HCT116 (cell line): ENCODE measurements at regions of chr18 and their contacts with region 1.

Region 1: DNA sequence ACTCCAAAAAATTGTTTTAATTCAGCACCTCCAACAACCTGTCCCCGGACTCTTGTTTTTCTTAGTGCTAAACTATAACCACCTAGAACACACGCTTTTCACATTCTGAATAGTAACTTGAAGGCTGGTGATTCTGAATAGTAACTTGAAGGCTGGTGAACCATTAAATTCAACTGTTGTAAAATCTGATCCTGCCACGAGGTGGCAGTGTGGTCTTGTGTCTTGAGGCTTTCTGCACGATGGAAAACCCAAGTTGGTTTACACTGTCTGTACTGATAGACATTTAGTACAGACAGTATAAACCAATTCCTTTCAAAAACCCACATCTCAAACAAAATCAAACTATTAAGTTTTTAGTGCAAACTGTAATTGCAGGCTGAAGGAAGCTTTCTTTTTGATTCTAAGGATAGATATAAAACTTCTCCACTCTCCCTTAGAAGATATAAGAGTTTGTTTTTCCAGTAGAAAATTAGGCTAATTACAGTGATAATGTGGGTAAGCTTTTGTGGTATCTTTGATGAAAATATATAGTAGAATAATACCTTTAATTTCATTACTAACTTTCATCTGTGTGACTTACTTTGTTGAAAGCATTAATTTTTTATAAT is 57.6 kb downstream of the VAPA start:
- DNase-seq: peak; percentile 60
- ATAC-seq: peak; percentile 83
- H3K4me3 ChIP-seq: no peak overlapping the region
- H3K27ac ChIP-seq: no peak overlapping the region
- H3K4me1 ChIP-seq: no peaks in the 10 kb centered on the region
- H3K27me3 ChIP-seq: no peaks in the 10 kb centered on the region
- CTCF ChIP-seq: peak; percentile 48 to 86 (median 58); a peak in 4 of 6 replicates
- POLR2A ChIP-seq: no peak
- RAD21 ChIP-seq: peak; percentile 91

Region 2: DNA sequence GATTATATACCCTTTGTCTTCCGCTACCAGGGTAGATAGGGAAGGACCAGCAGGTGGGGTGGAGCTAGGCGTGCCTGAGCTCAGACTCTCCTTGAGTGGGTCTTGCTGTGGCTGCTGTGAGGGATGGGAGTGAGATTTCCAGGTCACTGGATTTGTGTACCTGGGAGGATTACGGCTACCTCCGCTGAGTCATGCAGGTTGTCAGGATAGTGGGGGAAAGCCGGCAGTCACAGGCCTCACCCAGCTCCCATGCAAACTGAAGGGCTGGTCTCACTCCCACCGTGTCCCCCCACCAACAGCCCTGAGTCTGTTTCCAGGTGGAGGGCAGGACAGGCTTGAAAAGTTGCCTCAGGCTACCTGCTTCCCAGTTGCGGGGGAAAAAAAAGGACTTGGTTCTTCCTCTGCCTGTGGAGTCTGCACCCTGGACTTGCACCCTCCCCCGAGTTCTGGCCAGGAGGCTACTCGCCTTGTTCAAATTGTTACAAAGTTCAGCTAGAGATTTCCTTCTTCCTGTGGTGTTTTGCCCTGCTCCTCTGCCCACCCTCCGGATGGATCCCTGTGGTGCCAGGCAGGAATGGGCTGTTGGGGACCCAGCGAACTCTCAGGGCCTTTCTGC is 210.7 kb after region 1 on chr18:
- CTCF ChIA-PET with region 1: no interaction called
- POLR2A ChIA-PET with region 1: no interaction called
- RAD21 ChIA-PET with region 1: no interaction called
- intact Hi-C with region 1: no loop called
- DNase-seq: no peak
- ATAC-seq: no peak
- H3K4me3 ChIP-seq: no peak overlapping the region
- H3K27ac ChIP-seq: no peak overlapping the region
- H3K4me1 ChIP-seq: no peaks in the 10 kb centered on the region; a peak in 1 of 4 replicates
- H3K27me3 ChIP-seq: 0 out of 2 replicates have a peak, but pooled peaks cover 4% of the 10 kb centered on the region
- CTCF ChIP-seq: no peak
- POLR2A ChIP-seq: no peak
- RAD21 ChIP-seq: no peak

Region 3: DNA sequence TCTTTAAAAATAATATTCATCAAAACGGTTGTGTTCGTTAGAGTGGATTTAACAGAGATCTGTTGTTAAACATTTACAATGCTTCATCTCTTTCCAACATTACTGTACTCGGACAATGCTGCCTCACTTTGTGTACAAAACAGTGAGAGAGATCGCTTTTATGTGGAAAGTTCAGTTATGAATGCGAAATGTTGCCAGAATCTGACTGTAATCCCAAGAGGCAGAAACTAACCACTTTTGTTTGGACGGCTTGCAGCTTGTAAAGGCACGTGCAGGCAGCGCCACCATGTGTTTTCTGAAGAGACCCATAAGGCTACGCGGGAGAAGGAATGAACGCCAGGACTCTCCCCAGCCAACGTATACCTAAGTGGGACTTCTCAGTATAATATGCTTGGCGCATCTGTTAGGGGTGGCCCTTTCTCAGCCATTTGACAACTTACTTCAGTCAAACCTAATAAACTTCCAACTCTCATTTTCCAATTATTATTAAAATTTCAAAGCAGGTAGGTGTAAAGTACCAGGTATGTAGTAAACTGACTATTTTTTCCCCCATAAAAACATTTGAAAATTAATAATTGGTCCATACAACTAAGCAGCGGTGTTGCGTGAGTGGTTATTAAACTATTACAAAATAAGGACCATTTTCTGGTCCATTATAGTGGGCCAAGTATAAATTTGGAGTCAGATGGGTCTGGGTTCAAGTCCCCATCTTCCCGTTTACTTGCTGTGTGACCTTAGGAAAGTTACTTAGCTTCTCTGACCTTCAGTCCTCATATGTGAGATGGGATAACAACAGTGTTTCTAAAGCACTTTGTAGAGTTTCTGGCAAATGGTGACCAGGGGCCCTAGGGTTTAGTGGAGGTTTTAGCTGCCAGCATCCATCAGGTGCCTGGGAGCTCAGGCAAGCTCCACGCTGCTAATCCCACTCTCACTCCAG is 548.9 kb after region 1 on chr18:
- CTCF ChIA-PET with region 1: interaction called, 24 read pairs
- POLR2A ChIA-PET with region 1: interaction called, 4 read pairs
- RAD21 ChIA-PET with region 1: no interaction called
- intact Hi-C with region 1: loop called (anchors 1 kb)
- DNase-seq: peak; percentile 73
- ATAC-seq: peak; percentile 98
- H3K4me3 ChIP-seq: no peak overlapping the region
- H3K27ac ChIP-seq: no peak overlapping the region
- H3K4me1 ChIP-seq: peaks cover under 1 to 5% of the 10 kb centered on the region in 2 experiments; a peak in 3 of 4 replicates
- H3K27me3 ChIP-seq: peaks cover 27% of the 10 kb centered on the region; the same call in 1 of the 2 replicates
- CTCF ChIP-seq: peak; percentile 59 to 81 (median 61); a peak in 5 of 6 replicates
- POLR2A ChIP-seq: no peak
- RAD21 ChIP-seq: peak; percentile 89